ENCODE measurements at regions of chr4 and their contacts with region 1.

Region 1: GRCh38 chr4:119471259-119471658 is 149.3 kb upstream of the FABP2 start:
- DNase-seq: no peak
- ATAC-seq: no peak
- H3K4me3 ChIP-seq: no peak overlapping the region
- H3K4me3 Mint-ChIP-seq: no peak overlapping the region
- H3K27ac ChIP-seq: no peak overlapping the region
- H3K27ac Mint-ChIP-seq: no peak overlapping the region
- H3K4me1 ChIP-seq: no peaks in the 10 kb centered on the region
- H3K4me1 Mint-ChIP-seq: no peaks in the 10 kb centered on the region
- H3K27me3 ChIP-seq: no peaks in the 10 kb centered on the region
- H3K27me3 Mint-ChIP-seq: no peaks in the 10 kb centered on the region
- CTCF ChIP-seq: no peak

Region 2: DNA sequence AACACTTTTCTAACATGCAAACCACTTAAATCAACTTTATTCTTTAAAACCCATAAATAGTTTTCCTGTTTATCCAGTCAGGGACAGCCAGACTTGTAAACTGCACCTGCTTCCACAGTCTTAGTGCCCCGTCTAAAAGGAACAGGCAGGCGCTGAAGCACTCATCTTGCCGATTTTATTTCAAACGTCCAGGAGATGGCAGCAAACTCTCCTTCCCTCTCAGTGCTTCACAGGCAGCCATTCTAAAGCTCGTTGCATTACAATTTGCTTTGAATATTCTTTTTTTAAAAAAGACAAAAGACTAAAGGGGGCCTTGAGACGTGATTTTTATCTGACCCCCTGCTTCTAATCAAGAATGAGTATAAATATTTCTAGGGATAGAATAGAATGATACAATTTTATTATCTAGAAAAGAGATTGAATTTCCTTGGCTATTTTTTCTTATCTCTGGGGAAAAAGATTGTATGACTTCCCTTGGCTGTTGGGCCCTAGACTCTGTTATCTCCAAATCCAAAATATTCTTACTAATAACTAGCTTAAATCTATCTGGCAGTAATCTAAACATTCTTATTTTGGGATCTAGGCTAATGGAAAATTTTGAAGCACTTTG is 429.2 kb before region 1 on chr4:
- CTCF ChIA-PET with region 1: no interaction called
- POLR2A ChIA-PET with region 1: no interaction called
- intact Hi-C with region 1: loop called in 1 of 2 experiments (anchors 10 kb)
- DNase-seq: peak in 13 of 14 experiments; percentile 4 to 83 (median 37)
- ATAC-seq: peak; percentile 89
- H3K4me3 ChIP-seq: no peak overlapping the region
- H3K4me3 Mint-ChIP-seq: no peak overlapping the region
- H3K27ac ChIP-seq: no peak overlapping the region
- H3K27ac Mint-ChIP-seq: no peak overlapping the region
- H3K4me1 ChIP-seq: no peaks in the 10 kb centered on the region
- H3K4me1 Mint-ChIP-seq: no peaks in the 10 kb centered on the region
- H3K27me3 ChIP-seq: no peaks in the 10 kb centered on the region
- H3K27me3 Mint-ChIP-seq: no peaks in the 10 kb centered on the region
- CTCF ChIP-seq: peak; percentile 83

Region 3: DNA sequence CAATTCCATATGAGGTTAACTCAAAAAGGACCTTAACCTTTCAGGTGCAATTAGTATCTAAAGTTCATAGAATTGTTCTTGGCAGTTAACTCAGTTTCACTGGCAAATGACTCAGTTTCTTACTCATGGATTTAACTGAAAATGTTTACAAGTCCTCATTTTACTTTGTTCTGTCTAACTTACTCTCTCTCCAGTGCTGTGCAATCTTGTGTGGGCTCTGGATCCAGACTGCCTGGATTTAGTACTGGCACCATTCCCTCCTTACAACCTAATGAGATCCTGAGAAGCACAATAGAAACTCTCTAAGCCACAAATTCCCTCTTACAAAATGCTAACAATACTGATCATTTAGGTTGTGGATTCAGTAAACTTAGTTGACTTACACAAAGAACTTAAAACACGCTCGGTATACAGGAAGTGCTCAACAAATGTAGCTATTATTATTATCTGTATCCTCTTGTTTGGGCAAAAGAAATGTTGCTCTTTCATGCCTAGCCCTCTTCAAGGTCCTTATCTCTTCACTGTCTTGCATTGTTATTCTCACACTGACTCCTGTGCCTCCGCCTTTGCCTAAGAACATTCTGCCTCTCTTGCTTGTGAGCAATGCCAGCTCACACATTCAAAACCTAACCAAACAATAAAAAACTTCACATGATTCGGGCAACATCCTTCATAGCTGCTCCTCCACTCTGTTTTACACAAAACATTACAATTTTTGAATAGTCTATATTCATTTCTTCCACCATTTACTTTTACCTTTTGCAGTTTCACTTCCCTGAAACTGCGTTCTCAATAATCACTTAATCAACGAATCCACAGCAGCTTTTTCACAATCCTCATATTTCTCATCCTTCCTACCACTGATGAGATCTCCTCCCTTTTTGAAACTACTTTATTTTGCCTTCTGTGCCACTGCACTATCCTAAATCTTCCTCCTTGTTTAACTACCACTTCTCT is 65.6 kb after region 1 on chr4:
- CTCF ChIA-PET with region 1: no interaction called
- POLR2A ChIA-PET with region 1: no interaction called
- intact Hi-C with region 1: no loop called
- DNase-seq: no peak
- ATAC-seq: no peak
- H3K4me3 ChIP-seq: no peak overlapping the region
- H3K4me3 Mint-ChIP-seq: no peak overlapping the region
- H3K27ac ChIP-seq: no peak overlapping the region
- H3K27ac Mint-ChIP-seq: no peak overlapping the region
- H3K4me1 ChIP-seq: no peaks in the 10 kb centered on the region
- H3K4me1 Mint-ChIP-seq: no peaks in the 10 kb centered on the region
- H3K27me3 ChIP-seq: no peaks in the 10 kb centered on the region
- H3K27me3 Mint-ChIP-seq: no peaks in the 10 kb centered on the region
- CTCF ChIP-seq: no peak

Region 4: DNA sequence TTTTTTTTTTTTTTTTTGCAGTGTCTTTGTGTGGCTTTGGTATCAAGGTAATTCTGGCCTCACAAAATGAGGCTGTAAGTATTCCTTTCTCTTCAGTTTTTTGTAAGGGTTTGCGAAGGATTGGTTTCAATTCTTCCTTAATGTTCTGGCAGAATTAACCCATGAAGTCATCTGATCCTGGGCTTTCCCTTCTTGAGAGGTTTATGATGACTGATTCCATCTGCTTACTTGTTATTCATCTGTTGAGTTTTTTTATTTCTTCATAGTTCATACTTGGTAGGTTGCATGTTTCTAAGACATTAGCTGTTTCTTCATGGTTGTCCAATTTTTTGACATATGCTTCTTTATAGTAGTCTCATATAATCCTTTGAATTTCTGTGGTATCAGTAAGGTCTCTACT is 338.7 kb after region 1 on chr4:
- CTCF ChIA-PET with region 1: no interaction called
- POLR2A ChIA-PET with region 1: no interaction called
- intact Hi-C with region 1: no loop called
- DNase-seq: no peak
- ATAC-seq: no peak
- H3K4me3 ChIP-seq: no peak overlapping the region
- H3K4me3 Mint-ChIP-seq: no peak overlapping the region
- H3K27ac ChIP-seq: no peak overlapping the region
- H3K27ac Mint-ChIP-seq: no peak overlapping the region
- H3K4me1 ChIP-seq: no peaks in the 10 kb centered on the region
- H3K4me1 Mint-ChIP-seq: no peaks in the 10 kb centered on the region
- H3K27me3 ChIP-seq: peaks cover 0 to 4% of the 10 kb centered on the region in 2 experiments
- H3K27me3 Mint-ChIP-seq: no peaks in the 10 kb centered on the region
- CTCF ChIP-seq: no peak

Region 5: GRCh38 chr4:119939071-119939995 is 468.1 kb after region 1 on chr4:
- CTCF ChIA-PET with region 1: no interaction called
- POLR2A ChIA-PET with region 1: no interaction called
- intact Hi-C with region 1: no loop called
- DNase-seq: no peak
- ATAC-seq: no peak
- H3K4me3 ChIP-seq: no peak overlapping the region
- H3K4me3 Mint-ChIP-seq: no peak overlapping the region
- H3K27ac ChIP-seq: no peak overlapping the region
- H3K27ac Mint-ChIP-seq: no peak overlapping the region
- H3K4me1 ChIP-seq: no peaks in the 10 kb centered on the region
- H3K4me1 Mint-ChIP-seq: no peaks in the 10 kb centered on the region
- H3K27me3 ChIP-seq: no peaks in the 10 kb centered on the region
- H3K27me3 Mint-ChIP-seq: no peaks in the 10 kb centered on the region
- CTCF ChIP-seq: no peak

Measured in CD4-positive, alpha-beta T cell (primary cell).